ENCODE measurements at regions of chr10 and their contacts with region 1.

Region 1: DNA sequence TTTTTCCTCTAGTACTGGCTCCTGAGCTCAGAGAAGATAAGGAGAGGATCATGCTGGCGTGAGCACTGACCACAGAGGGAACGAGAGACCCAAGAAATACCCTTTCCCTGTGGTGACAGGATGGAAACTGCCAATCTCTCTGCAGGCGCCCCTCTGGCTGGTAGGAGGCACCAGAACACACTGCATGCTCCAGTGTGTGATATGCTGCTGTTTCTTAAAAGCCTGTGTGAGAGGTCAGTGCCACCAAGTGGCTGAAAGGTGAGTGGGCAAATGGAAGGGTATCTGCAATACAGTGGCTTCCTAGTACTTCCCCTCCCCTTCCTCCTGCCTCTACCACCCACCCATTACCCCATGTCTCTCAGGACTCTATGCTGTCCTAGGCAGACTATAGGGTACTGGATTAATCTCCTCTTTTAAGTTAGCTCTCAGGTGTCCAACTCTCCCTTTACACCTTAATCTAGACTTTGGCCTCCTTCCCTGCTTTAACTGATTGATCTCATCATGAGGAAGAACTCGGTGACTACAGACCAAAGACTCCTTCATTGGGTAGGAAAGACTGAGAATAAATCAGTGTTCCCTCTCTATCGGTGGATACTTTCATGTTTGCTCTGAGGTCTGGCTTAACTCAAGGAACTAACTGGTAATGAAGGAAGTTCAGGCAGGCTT is 283.6 kb downstream of the ADRA2A start:
- DNase-seq: peak; percentile 42
- ATAC-seq: peak; percentile 89

Region 2: GRCh38 chr10:111076191-111076681 is 284.2 kb before region 1 on chr10:
- intact Hi-C with region 1: loop called (anchors 10 kb)
- DNase-seq: peak; percentile 75
- ATAC-seq: peak; percentile 93

Region 3: DNA sequence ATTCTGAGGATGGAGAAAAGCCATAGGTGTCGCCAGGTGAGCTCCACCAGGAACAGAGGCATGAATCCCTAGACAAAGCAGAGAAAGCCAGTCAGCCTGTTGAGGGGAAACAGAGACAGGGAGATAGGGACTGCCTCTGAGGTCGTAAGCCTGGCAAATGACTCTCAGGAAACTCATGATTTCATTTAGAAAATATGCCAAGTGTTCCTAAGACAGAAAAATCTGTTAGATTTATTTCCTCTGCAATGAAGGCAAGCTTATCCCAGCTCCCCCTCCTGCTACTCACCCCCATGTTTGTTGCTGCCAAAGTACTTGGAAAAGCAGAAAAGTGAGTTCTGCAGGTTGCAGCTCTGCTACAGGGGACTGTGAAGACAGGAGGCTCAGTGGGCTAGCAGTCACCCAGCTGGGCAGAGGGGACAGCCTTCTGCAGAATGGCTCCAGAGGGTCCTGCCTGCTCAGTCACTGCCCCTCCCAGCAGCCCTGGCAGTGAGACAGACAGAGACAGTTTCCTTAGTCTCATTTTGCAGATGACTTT is 99.2 kb before region 1 on chr10:
- intact Hi-C with region 1: no loop called
- DNase-seq: no peak
- ATAC-seq: no peak